ENCODE measurements at regions of chr1 and their contacts with region 1.

Region 1: DNA sequence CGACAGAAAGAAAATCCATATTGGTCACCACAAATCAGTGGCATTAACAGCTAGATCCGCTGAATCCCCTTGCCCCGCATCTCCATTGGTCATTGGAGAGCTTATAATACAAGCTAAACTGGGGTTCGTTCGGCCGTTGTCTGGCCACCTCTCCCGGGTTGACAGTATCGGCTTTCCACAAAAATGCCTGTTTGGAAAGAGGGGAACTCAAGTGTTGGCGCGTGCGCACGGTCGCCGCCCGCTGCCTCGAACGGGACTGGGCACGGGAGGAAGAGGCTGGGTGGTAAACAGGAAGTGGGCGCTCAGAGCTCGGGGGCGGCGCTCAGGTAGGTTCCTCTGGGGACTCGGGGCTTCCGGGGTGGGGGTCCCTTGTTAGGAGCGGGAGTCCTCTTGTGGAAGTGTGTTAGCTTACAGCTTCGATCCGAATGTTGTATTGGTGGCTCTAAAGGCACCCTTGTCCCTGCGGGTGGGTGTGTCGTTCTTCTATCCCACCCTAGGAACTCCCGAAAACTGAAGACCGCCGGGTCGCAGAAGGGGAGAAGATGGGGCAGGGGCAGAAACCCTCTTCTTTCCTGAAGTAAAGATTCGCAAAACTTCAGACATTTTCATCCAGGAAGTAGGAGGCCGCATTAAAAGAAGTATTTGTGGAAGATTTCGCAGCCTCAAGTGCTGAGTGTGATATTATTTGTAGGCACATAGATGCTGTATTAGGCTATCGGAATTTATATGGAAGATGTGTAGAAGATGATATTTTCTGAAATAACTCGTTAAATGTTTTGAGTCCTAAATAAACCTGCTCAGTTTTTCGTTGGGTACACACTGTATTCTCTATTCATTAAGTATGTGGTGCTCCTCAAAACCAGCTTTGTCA is 962 bp downstream of the BROX start:
- DNase-seq: peak; percentile 95
- H3K4me3 ChIP-seq: peak overlapping the region; percentile 49 to 64
- H3K27ac ChIP-seq: peak overlapping the region; percentile 98
- H3K4me1 ChIP-seq: no peaks in the 10 kb centered on the region
- H3K27me3 ChIP-seq: no peaks in the 10 kb centered on the region
- CTCF ChIP-seq: no peak
- POLR2A ChIP-seq: peak; percentile 57

Region 2: GRCh38 chr1:222643938-222644635 is 69.2 kb before region 1 on chr1:
- intact Hi-C with region 1: loop called (anchors 1 kb)
- DNase-seq: peak; percentile 95
- H3K4me3 ChIP-seq: peak overlapping the region; percentile 61 to 78
- H3K27ac ChIP-seq: peak overlapping the region; percentile 85 to 86
- H3K4me1 ChIP-seq: peaks cover 2% of the 10 kb centered on the region
- H3K27me3 ChIP-seq: no peaks in the 10 kb centered on the region
- CTCF ChIP-seq: peak in 2 of 4 experiments; percentile 18 to 22
- POLR2A ChIP-seq: peak; percentile 48

Region 3: GRCh38 chr1:222665964-222666363 is 47.4 kb before region 1 on chr1:
- intact Hi-C with region 1: loop called (anchors 5 kb)
- DNase-seq: no peak
- H3K4me3 ChIP-seq: no peak overlapping the region
- H3K27ac ChIP-seq: no peak overlapping the region
- H3K4me1 ChIP-seq: no peaks in the 10 kb centered on the region
- H3K27me3 ChIP-seq: no peaks in the 10 kb centered on the region
- CTCF ChIP-seq: no peak
- POLR2A ChIP-seq: no peak

Region 4: GRCh38 chr1:222814536-222815439 is 101.5 kb after region 1 on chr1 and contains the start of gene DISP1:
- intact Hi-C with region 1: no loop called
- DNase-seq: peak; percentile 79
- H3K4me3 ChIP-seq: peak within 1 kb of the TSS; percentile 83 to 90
- H3K27ac ChIP-seq: peak within 1 kb of the TSS; percentile 92 to 94
- H3K4me1 ChIP-seq: no peaks in the 10 kb centered on the region
- H3K27me3 ChIP-seq: no peaks in the 10 kb centered on the region
- CTCF ChIP-seq: no peak
- POLR2A ChIP-seq: peak; percentile 43
- total RNA-seq, gene DISP1: 4.9 to 43.1 TPM

Measured in prostate gland (tissue), 2 donors.